ENCODE measurements at regions of chr15 and their contacts with region 1.

Region 1: GRCh38 chr15:60128000-60128376 is 123.9 kb downstream of the FOXB1 start:
- DNase-seq: peak; percentile 10
- ATAC-seq: peak; percentile 54
- H3K4me3 ChIP-seq: peak overlapping the region; percentile 73
- H3K27ac ChIP-seq: no peak overlapping the region
- H3K4me1 ChIP-seq: no peaks in the 10 kb centered on the region
- H3K27me3 ChIP-seq: 0 out of 2 replicates have a peak, but pooled peaks cover 4% of the 10 kb centered on the region
- CTCF ChIP-seq: no peak

Region 2: DNA sequence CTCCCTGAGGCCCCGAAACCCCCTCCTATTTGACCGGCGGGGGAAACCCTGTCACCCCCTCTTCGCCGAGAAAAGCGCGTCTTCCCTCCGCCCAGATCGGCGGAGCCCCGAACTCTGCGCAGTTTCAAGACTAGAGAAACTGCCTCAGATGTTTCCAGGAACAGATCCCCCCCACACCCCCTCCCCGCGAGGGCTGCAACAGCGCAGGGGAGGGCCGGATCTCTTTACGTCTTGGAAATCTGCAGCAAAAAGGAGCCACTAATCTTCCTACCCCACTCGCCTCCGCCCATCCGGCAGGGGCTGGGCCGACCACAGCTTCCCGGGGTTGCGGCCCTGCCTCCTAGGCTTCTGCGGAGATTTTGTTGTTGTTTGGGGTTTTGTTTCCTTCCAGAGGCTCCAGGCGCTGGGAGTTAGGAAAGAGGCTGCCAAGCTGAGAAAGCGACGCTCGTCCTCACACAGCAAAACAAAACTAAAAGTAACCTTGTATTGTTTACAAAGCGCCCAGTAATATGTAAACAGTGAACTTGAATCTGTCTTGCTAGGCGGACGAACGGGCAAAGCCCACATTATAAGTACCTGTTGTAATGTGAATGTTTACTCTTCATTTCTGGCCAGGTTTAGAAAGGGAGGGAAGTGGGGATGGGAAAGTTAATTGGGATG is 121.7 kb before region 1 on chr15:
- CTCF ChIA-PET with region 1: no interaction called
- POLR2A ChIA-PET with region 1: no interaction called
- intact Hi-C with region 1: loop called (anchors 5 kb)
- DNase-seq: peak; percentile 42
- ATAC-seq: peak; percentile 83
- H3K4me3 ChIP-seq: peak overlapping the region; percentile 67
- H3K27ac ChIP-seq: no peak overlapping the region
- H3K4me1 ChIP-seq: peaks cover 5% of the 10 kb centered on the region; the same call in 1 of the 2 replicates
- H3K27me3 ChIP-seq: peaks cover 67% of the 10 kb centered on the region
- CTCF ChIP-seq: no peak